ENCODE measurements at regions of chr18 and their contacts with region 1.

Region 1: GRCh38 chr18:78429127-78430108 is 550.2 kb upstream of the SALL3 start:
- DNase-seq: no peak
- ATAC-seq: no peak
- H3K4me3 ChIP-seq: no peak overlapping the region
- H3K4me3 Mint-ChIP-seq: no peak overlapping the region
- H3K27ac ChIP-seq: no peak overlapping the region
- H3K27ac Mint-ChIP-seq: no peak overlapping the region
- H3K4me1 ChIP-seq: no peaks in the 10 kb centered on the region
- H3K4me1 Mint-ChIP-seq: no peaks in the 10 kb centered on the region
- H3K27me3 ChIP-seq: no peaks in the 10 kb centered on the region
- H3K27me3 Mint-ChIP-seq: no peaks in the 10 kb centered on the region
- CTCF ChIP-seq: no peak

Region 2: DNA sequence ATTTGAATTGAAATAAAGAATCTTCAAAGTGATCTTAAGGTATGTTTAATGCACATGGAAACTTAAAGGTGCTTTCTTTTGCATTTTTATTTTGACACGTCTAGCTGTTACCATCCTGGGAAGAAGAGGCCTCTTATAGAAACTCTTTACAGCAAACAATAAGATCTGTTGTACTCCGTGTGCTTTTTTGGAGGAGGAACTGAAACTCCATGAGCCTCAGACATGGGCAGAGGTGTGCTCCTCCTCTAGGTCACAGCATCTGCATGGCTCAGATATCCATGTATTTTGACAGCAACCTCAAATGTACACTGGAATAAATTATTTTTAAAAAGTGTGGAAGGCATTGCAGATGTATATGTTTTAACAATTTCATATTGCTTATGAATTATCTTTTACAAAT is 233.1 kb before region 1 on chr18:
- CTCF ChIA-PET with region 1: no interaction called
- POLR2A ChIA-PET with region 1: no interaction called
- intact Hi-C with region 1: no loop called
- DNase-seq: no peak
- ATAC-seq: no peak
- H3K4me3 ChIP-seq: no peak overlapping the region
- H3K4me3 Mint-ChIP-seq: no peak overlapping the region
- H3K27ac ChIP-seq: no peak overlapping the region
- H3K27ac Mint-ChIP-seq: no peak overlapping the region
- H3K4me1 ChIP-seq: no peaks in the 10 kb centered on the region
- H3K4me1 Mint-ChIP-seq: no peaks in the 10 kb centered on the region
- H3K27me3 ChIP-seq: no peaks in the 10 kb centered on the region
- H3K27me3 Mint-ChIP-seq: no peaks in the 10 kb centered on the region
- CTCF ChIP-seq: no peak

Region 3: GRCh38 chr18:78448106-78448505 is 18.7 kb after region 1 on chr18:
- CTCF ChIA-PET with region 1: no interaction called
- POLR2A ChIA-PET with region 1: no interaction called
- intact Hi-C with region 1: no loop called
- DNase-seq: no peak
- ATAC-seq: no peak
- H3K4me3 ChIP-seq: no peak overlapping the region
- H3K4me3 Mint-ChIP-seq: no peak overlapping the region
- H3K27ac ChIP-seq: no peak overlapping the region
- H3K27ac Mint-ChIP-seq: no peak overlapping the region
- H3K4me1 ChIP-seq: no peaks in the 10 kb centered on the region
- H3K4me1 Mint-ChIP-seq: no peaks in the 10 kb centered on the region
- H3K27me3 ChIP-seq: no peaks in the 10 kb centered on the region
- H3K27me3 Mint-ChIP-seq: no peaks in the 10 kb centered on the region
- CTCF ChIP-seq: no peak

Region 4: GRCh38 chr18:78473563-78473962 is 44.1 kb after region 1 on chr18:
- CTCF ChIA-PET with region 1: no interaction called
- POLR2A ChIA-PET with region 1: no interaction called
- intact Hi-C with region 1: no loop called
- DNase-seq: no peak
- ATAC-seq: no peak
- H3K4me3 ChIP-seq: no peak overlapping the region
- H3K4me3 Mint-ChIP-seq: no peak overlapping the region
- H3K27ac ChIP-seq: no peak overlapping the region
- H3K27ac Mint-ChIP-seq: no peak overlapping the region
- H3K4me1 ChIP-seq: no peaks in the 10 kb centered on the region
- H3K4me1 Mint-ChIP-seq: no peaks in the 10 kb centered on the region
- H3K27me3 ChIP-seq: no peaks in the 10 kb centered on the region
- H3K27me3 Mint-ChIP-seq: peaks cover 2% of the 10 kb centered on the region
- CTCF ChIP-seq: no peak

Region 5: DNA sequence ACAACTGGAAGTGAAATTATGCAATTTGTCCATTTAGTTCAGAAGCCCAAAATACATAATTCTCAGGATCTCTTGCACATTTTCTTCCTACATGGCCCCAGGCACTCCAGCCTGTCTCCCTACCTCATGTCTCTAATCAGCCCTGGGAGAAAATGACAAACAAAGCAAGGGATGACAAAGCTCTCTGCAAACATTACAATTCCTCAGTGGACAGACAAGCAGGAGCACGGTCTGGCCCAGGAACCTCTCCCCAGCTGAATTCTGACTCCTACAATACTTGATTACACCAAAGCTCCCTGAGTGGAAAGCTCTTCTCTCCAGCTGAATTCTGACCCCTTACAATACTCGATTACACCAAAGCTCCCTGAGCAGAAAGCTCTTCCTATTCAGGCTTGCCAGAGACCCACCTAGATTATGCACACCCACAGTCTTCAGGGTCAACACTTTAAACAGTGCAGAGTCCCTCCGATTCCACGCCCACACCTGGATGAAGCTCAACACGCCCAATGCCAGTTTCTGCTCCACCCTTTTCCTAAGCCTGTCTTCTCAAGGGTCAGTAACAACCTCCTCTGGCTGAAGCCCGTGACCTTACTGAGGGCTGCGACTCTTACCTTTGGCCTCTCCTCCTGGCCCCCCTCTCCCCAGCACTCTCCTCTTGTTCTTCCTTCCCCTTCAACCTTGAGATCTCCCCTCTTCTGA is 58.1 kb after region 1 on chr18:
- CTCF ChIA-PET with region 1: no interaction called
- POLR2A ChIA-PET with region 1: no interaction called
- intact Hi-C with region 1: loop called in 1 of 2 experiments (anchors 10 kb)
- DNase-seq: no peak
- ATAC-seq: no peak
- H3K4me3 ChIP-seq: no peak overlapping the region
- H3K4me3 Mint-ChIP-seq: no peak overlapping the region
- H3K27ac ChIP-seq: no peak overlapping the region
- H3K27ac Mint-ChIP-seq: no peak overlapping the region
- H3K4me1 ChIP-seq: no peaks in the 10 kb centered on the region
- H3K4me1 Mint-ChIP-seq: no peaks in the 10 kb centered on the region
- H3K27me3 ChIP-seq: no peaks in the 10 kb centered on the region
- H3K27me3 Mint-ChIP-seq: peaks cover 3% of the 10 kb centered on the region
- CTCF ChIP-seq: no peak

Region 6: DNA sequence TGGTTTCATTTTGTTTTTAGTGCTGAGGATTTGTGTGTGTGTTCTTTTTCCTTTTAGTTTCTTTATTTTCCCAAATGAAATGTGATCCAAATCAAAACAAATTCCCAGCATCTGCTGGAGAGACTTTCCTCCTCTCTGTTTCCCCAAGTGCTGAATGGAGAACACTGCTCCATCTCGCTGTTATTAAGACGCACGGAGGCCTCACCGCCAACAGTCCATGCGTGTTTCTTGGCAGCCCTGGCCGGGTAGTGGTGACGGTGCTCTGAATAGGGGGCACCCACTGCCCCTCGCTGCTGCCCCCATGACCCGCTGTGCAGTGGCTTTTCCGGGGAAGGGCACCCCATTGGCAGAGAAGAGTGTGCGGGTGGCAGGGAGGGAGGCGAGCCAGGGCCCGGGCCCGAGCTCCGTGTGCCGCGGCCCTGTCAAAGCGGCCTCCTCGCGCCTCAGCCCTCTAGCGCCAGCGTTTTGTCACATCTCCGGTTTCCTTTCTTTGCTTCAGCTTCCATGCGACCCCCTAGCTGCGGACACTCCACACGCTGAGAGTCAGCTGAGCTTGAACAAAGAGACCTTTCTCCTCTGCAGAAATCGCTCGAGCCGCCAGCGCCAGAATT is 76.5 kb after region 1 on chr18:
- CTCF ChIA-PET with region 1: no interaction called
- POLR2A ChIA-PET with region 1: no interaction called
- intact Hi-C with region 1: no loop called
- DNase-seq: no peak
- ATAC-seq: no peak
- H3K4me3 ChIP-seq: no peak overlapping the region
- H3K4me3 Mint-ChIP-seq: no peak overlapping the region
- H3K27ac ChIP-seq: no peak overlapping the region
- H3K27ac Mint-ChIP-seq: no peak overlapping the region
- H3K4me1 ChIP-seq: no peaks in the 10 kb centered on the region
- H3K4me1 Mint-ChIP-seq: no peaks in the 10 kb centered on the region
- H3K27me3 ChIP-seq: no peaks in the 10 kb centered on the region
- H3K27me3 Mint-ChIP-seq: no peaks in the 10 kb centered on the region
- CTCF ChIP-seq: no peak